ENCODE measurements at regions of chr1 and their contacts with region 1.

Region 1: DNA sequence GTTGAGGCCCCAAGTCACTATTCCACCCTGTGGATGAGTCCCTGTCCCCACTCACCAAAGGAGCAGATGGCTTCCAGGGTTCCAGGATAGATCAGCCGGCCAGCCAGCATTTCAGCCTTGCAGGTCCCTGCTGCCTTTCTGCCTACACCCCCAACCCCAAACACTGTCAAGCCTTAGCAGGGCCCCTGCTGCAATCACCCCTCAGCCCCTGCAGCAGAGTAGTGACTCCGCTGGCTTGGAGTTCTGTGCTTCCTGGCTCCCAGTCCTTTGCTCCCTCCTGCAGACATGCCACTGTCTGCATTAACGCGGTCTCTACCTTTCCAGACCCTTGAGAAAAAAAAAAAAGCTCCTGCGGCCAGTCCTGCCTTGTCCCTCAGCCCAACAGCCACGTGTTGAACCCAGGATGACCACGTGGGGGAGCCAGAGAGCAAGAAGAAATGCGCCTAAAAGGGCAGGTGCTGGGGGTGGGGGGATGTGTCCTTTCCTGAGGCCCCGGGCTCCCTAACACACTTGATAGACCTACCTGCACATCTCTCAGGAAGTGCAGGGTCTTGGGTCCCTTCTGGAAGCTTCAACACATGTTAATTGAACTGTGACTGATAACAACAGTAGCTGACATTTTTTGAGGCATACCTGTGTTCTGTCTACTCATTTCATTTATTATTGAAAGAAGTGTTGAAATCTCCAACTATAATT is 37.4 kb downstream of the RASSF5 start:
- DNase-seq: peak; percentile 50 to 99
- H3K4me3 ChIP-seq: no peak overlapping the region
- H3K27ac ChIP-seq: no peak overlapping the region
- H3K4me1 ChIP-seq: peaks cover 0 to 3% (median 2%) of the 10 kb centered on the region in 4 experiments; a peak in 2 of 7 replicates
- H3K27me3 ChIP-seq: no peaks in the 10 kb centered on the region
- CTCF ChIP-seq: peak; percentile 84 to 93 (median 92)
- EP300 ChIP-seq: peak in 1 of 2 experiments; percentile 58; a peak in 1 of 3 replicates
- POLR2A ChIP-seq: no peak
- RAD21 ChIP-seq: peak; percentile 80 to 88

Region 2: DNA sequence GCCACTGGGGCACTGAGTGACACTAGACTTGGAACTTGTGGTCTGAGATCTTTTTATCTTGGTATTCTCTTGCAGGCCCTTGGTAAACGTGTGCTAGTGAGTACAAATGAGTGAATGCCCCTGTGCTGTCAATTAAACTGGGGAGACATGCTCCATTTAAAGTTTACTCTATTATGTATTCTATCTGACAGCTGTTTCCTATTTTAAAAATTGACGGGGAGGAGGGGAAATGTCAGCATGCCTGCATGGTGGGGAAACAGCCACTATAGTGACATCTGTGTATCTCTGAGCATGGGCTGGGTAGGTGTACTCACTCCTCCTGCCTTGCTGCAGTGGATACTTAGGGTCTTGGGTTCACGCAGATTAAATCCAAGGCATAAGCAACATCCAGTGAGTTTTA is 133.4 kb before region 1 on chr1:
- CTCF ChIA-PET with region 1: no interaction called
- POLR2A ChIA-PET with region 1: no interaction called
- DNase-seq: no peak
- H3K4me3 ChIP-seq: no peak overlapping the region
- H3K27ac ChIP-seq: no peak overlapping the region
- H3K4me1 ChIP-seq: no peaks in the 10 kb centered on the region
- H3K27me3 ChIP-seq: peaks cover 0 to 1% (median 0%) of the 10 kb centered on the region in 4 experiments; a peak in 1 of 7 replicates
- CTCF ChIP-seq: no peak
- EP300 ChIP-seq: no peak
- POLR2A ChIP-seq: no peak
- RAD21 ChIP-seq: no peak

Region 3: GRCh38 chr1:206469933-206470691 is 74.6 kb before region 1 on chr1 and contains the start of gene IKBKE:
- CTCF ChIA-PET with region 1: interaction called, 13 read pairs
- POLR2A ChIA-PET with region 1: interaction called, 3 read pairs
- DNase-seq: peak in 1 of 2 experiments; percentile 68
- H3K4me3 ChIP-seq: peak within 1 kb of the TSS; percentile 31 to 65 (median 51)
- H3K27ac ChIP-seq: no peak within 1 kb of the TSS
- H3K4me1 ChIP-seq: peaks cover 3 to 47% (median 25%) of the 10 kb centered on the region in 4 experiments
- H3K27me3 ChIP-seq: peaks cover 0 to 3% (median 0%) of the 10 kb centered on the region in 4 experiments; a peak in 2 of 7 replicates
- CTCF ChIP-seq: peak in 1 of 3 experiments; percentile 18; a peak in 1 of 4 replicates
- EP300 ChIP-seq: no peak
- POLR2A ChIP-seq: no peak
- RAD21 ChIP-seq: no peak
- total RNA-seq, gene IKBKE: 8.6 and 9.8 TPM in 2 replicates

Region 4: GRCh38 chr1:206496131-206496793 is 48.4 kb before region 1 on chr1:
- CTCF ChIA-PET with region 1: interaction called, 34 read pairs
- POLR2A ChIA-PET with region 1: interaction called, 4 read pairs
- DNase-seq: no peak
- H3K4me3 ChIP-seq: no peak overlapping the region
- H3K27ac ChIP-seq: no peak overlapping the region
- H3K4me1 ChIP-seq: 0 out of 7 replicates have a peak, but pooled peaks cover 0 to 3% (median 0%) of the 10 kb centered on the region in 4 experiments
- H3K27me3 ChIP-seq: no peaks in the 10 kb centered on the region
- CTCF ChIP-seq: no peak
- EP300 ChIP-seq: no peak
- POLR2A ChIP-seq: no peak
- RAD21 ChIP-seq: no peak

Region 5: GRCh38 chr1:206521143-206521542 is 23.6 kb before region 1 on chr1:
- CTCF ChIA-PET with region 1: interaction called, 29 read pairs
- POLR2A ChIA-PET with region 1: interaction called, 3 read pairs
- DNase-seq: no peak
- H3K4me3 ChIP-seq: no peak overlapping the region
- H3K27ac ChIP-seq: no peak overlapping the region
- H3K4me1 ChIP-seq: no peaks in the 10 kb centered on the region
- H3K27me3 ChIP-seq: no peaks in the 10 kb centered on the region
- CTCF ChIP-seq: no peak
- EP300 ChIP-seq: no peak
- POLR2A ChIP-seq: no peak
- RAD21 ChIP-seq: no peak

Region 6: DNA sequence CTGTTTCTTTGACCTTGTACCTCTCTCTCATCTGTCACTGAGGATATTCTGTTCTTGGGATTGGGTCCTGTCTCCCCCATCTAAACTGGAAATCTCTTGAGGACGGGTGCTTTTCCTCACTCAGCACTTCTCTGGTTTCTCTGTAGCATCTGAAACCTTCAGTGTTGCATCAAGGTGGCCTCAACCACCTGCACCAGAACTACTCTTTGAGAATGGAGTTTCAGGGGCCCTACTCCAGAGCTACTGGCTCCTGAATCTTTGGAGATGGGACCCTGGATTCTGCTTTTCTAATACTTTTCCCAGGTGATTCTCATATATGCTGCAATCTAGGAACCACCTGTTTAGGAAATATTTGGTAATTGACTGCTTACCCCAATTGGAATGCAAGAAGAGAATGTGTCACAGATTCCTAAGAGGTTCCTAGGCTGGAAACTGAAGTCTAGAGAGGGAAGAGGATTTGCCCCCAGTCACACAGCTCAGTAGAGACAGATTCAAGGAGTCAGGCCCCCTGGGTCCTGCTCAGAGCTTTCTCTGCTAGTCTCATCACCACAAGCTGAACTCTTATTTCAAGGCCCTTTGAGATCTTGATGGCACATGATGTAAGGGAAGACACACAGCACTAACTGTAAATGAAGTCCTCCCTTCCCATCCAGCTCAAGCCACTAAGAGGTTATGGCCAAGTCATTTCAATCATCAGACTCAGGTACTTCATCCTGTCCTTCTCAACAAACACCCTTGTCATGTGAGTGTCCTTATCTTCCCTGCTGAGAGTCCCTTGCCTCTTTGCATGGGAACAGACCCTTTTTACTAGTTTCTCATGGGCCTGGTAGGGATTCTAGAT is 18.9 kb after region 1 on chr1:
- CTCF ChIA-PET with region 1: interaction called, 38 read pairs
- POLR2A ChIA-PET with region 1: no interaction called
- DNase-seq: no peak
- H3K4me3 ChIP-seq: no peak overlapping the region
- H3K27ac ChIP-seq: no peak overlapping the region
- H3K4me1 ChIP-seq: peaks cover 0 to under 1% (median 0%) of the 10 kb centered on the region in 4 experiments; a peak in 4 of 7 replicates
- H3K27me3 ChIP-seq: peaks cover 0 to 6% (median 2%) of the 10 kb centered on the region in 4 experiments; a peak in 3 of 7 replicates
- CTCF ChIP-seq: no peak
- EP300 ChIP-seq: no peak
- POLR2A ChIP-seq: no peak
- RAD21 ChIP-seq: no peak

Measured in H1 (cell line).